ENCODE measurements at regions of chr3 and their contacts with region 1.

Region 1: GRCh38 chr3:46976326-46977190 is at the start of gene CCDC12:
- DNase-seq: peak; percentile 95 to 99 (median 97)
- ATAC-seq: peak; percentile 87
- H3K4me3 ChIP-seq: peak within 1 kb of the TSS; percentile 68
- H3K27ac ChIP-seq: peak within 1 kb of the TSS; percentile 98
- H3K4me1 ChIP-seq: peaks cover 49 to 69% of the 10 kb centered on the region in 2 experiments
- H3K27me3 ChIP-seq: no peaks in the 10 kb centered on the region
- CTCF ChIP-seq: no peak
- EP300 ChIP-seq: peak; percentile 73
- POLR2A ChIP-seq: peak; percentile 99
- RAD21 ChIP-seq: peak in 1 of 2 experiments; percentile 20; a peak in 1 of 4 replicates
- polyA plus RNA-seq, gene CCDC12: 8.9 to 20.9 TPM

Region 2: DNA sequence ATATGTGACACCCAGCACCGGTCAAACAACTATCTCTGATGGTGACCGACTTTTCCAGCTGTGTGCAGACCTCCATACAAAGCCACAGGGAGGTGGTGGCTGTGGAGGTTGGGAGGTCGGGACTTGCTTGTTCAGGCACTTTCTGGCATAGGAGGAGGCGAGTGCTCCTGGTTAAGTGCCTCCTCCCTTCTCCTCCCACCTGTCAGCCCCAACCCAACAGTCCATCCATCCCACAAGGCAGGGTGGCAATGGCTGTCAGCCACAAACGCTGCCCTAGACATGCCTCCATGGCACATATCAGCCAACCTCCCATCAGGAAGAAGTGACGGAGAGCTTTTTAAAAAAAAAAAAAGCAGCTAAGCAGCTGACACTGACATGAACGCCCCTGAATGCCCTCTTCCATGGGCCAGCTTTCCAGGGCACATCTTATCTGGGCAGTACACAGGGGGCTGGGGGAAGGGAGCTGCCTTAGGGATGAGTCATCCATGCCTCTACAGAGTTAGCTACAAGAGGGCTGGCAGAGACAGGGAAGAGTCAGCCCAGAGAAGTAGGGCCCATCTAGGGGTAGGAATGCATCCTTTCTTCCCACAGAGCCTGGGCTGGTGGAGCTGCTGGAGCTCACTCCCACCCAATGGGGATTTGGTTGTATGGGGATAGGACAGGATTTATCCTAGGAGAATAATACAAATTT is 41.2 kb before region 1 on chr3:
- CTCF ChIA-PET with region 1: no interaction called
- POLR2A ChIA-PET with region 1: interaction called, 8 read pairs
- in situ Hi-C with region 1: no loop called
- intact Hi-C with region 1: loop called (anchors 5 kb)
- DNase-seq: peak; percentile 84 to 88 (median 86)
- ATAC-seq: peak; percentile 81
- H3K4me3 ChIP-seq: no peak overlapping the region
- H3K27ac ChIP-seq: peak overlapping the region; percentile 42; the same call in 2 of the 3 replicates
- H3K4me1 ChIP-seq: peaks cover 39 to 40% of the 10 kb centered on the region in 2 experiments
- H3K27me3 ChIP-seq: no peaks in the 10 kb centered on the region
- CTCF ChIP-seq: peak; percentile 26 to 47 (median 44); a peak in 4 of 6 replicates
- EP300 ChIP-seq: peak; percentile 85
- POLR2A ChIP-seq: 0 out of 2 replicates have a peak, but pooled peaks have one; percentile 29
- RAD21 ChIP-seq: peak; percentile 14 to 31; a peak in 3 of 4 replicates

Region 3: DNA sequence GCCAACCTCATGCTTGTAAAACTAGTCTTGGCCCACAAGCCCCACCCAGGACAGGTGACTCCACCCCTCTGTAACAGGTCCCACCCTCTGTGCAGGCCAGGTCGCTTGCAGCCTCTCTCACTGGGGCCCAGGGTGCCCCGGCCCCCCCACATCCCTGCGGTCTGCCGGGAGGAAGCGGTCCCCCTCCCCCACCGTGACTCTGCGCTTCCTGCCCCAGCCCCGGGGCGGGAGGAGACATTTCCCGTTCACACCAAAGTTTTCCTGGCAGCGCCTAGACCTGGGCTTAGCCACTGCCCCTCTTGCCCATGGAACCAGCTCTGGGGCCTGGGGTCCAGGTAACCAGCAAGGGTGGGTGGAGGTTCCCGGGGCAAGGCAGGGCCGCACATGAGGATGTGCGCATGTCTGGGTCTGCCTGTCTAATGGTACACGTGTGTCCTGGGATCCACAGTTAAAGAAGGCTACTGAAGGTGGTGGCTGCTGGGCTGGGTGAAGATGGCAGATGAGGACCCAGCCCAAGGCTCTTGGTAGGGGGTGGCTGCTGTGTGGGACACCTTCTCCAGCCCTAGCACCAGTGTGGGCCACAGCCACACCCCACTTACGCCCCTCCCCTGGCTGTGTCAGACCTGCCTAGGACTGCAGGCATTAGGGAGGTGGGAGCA is 11.3 kb after region 1 on chr3:
- CTCF ChIA-PET with region 1: no interaction called
- POLR2A ChIA-PET with region 1: interaction called, 35 read pairs
- in situ Hi-C with region 1: no loop called
- intact Hi-C with region 1: loop called (anchors 1 kb)
- DNase-seq: peak; percentile 97 to 99 (median 98)
- ATAC-seq: peak; percentile 95
- H3K4me3 ChIP-seq: peak overlapping the region; percentile 46
- H3K27ac ChIP-seq: peak overlapping the region; percentile 99
- H3K4me1 ChIP-seq: peaks cover 34 to 67% of the 10 kb centered on the region in 2 experiments
- H3K27me3 ChIP-seq: no peaks in the 10 kb centered on the region
- CTCF ChIP-seq: no peak
- EP300 ChIP-seq: peak; percentile 90
- POLR2A ChIP-seq: peak; percentile 88
- RAD21 ChIP-seq: peak in 1 of 2 experiments; percentile 26; a peak in 2 of 4 replicates